AG04450 (cell line): ENCODE measurements at regions of chr1 and their contacts with region 1.

Region 1: DNA sequence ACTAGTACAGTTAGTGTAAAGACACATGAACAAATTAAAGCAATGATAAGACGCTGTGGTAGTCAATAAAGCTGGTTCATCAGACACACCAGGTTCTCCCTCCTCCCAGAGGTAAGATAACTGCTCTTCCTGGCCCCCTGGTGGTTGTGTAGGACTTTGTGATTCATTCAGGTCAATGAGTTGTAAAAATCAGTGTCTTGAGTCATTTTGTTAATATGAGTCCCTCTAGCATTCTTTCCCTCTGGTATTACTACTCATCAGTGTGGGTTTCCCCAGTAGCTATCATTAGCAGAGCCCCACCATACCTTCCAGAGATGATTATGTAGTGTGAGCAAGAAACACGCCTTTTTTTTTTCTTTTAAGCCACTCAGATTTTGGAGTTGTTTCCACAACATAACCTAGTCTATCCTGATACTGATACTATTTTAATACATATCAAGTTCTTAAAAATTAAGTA is 3.6 kb upstream of the SETDB1 start:
- DNase-seq: peak; percentile 76
- H3K4me3 ChIP-seq: no peak overlapping the region
- H3K27ac ChIP-seq: no peak overlapping the region
- H3K27me3 ChIP-seq: no peaks in the 10 kb centered on the region
- CTCF ChIP-seq: peak; percentile 84

Region 2: GRCh38 chr1:150863724-150864123 is 58.8 kb before region 1 on chr1:
- CTCF ChIA-PET with region 1: interaction called, 13 read pairs
- POLR2A ChIA-PET with region 1: no interaction called
- DNase-seq: no peak
- H3K4me3 ChIP-seq: no peak overlapping the region
- H3K27ac ChIP-seq: no peak overlapping the region
- H3K27me3 ChIP-seq: no peaks in the 10 kb centered on the region
- CTCF ChIP-seq: no peak

Region 3: GRCh38 chr1:150881331-150882070 is 41.0 kb before region 1 on chr1:
- CTCF ChIA-PET with region 1: interaction called, 18 read pairs
- POLR2A ChIA-PET with region 1: no interaction called
- DNase-seq: peak; percentile 89
- H3K4me3 ChIP-seq: no peak overlapping the region
- H3K27ac ChIP-seq: peak overlapping the region; percentile 91
- H3K27me3 ChIP-seq: no peaks in the 10 kb centered on the region
- CTCF ChIP-seq: no peak

Region 4: GRCh38 chr1:150895601-150896000 is 26.9 kb before region 1 on chr1:
- CTCF ChIA-PET with region 1: interaction called, 11 read pairs
- POLR2A ChIA-PET with region 1: no interaction called
- DNase-seq: no peak
- H3K4me3 ChIP-seq: no peak overlapping the region
- H3K27ac ChIP-seq: no peak overlapping the region
- H3K27me3 ChIP-seq: no peaks in the 10 kb centered on the region
- CTCF ChIP-seq: no peak